Caco-2 (cell line): ENCODE measurements at regions of chr10 and their contacts with region 1.

Region 1: GRCh38 chr10:79374312-79375191 is 27.3 kb downstream of the PPIF start:
- DNase-seq: peak; percentile 83 to 91
- H3K4me3 ChIP-seq: no peak overlapping the region
- H3K4me3 Mint-ChIP-seq: no peak overlapping the region
- H3K27ac Mint-ChIP-seq: peak overlapping the region; percentile 23
- H3K4me1 ChIP-seq: no peaks in the 10 kb centered on the region
- H3K4me1 Mint-ChIP-seq: no peaks in the 10 kb centered on the region
- H3K27me3 ChIP-seq: no peaks in the 10 kb centered on the region
- H3K27me3 Mint-ChIP-seq: no peaks in the 10 kb centered on the region
- CTCF ChIP-seq: peak; percentile 91 to 97

Region 2: DNA sequence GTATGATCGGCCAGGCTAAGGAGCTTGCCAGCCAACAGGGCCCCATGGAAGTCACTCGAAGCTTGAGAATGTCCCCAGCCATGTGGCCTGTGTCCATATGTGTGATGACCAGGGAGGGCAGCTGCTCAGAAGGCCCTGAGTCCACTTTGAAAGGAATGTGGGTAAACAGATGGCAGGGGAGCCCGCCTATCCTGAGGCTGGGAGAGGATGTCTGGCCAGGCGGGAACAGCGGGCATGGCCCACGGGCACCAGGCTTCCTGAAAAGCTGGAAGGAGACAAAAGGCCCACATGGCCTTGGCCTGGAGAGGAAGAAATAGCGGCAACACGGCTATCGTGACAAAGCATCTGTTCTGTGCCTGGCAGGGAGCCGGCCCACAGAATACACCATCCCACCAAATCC is 165.2 kb before region 1 on chr10:
- CTCF ChIA-PET with region 1: no interaction called
- POLR2A ChIA-PET with region 1: no interaction called
- intact Hi-C with region 1: no loop called
- DNase-seq: no peak
- H3K4me3 ChIP-seq: no peak overlapping the region
- H3K4me3 Mint-ChIP-seq: no peak overlapping the region
- H3K27ac Mint-ChIP-seq: no peak overlapping the region
- H3K4me1 ChIP-seq: no peaks in the 10 kb centered on the region
- H3K4me1 Mint-ChIP-seq: no peaks in the 10 kb centered on the region
- H3K27me3 ChIP-seq: no peaks in the 10 kb centered on the region
- H3K27me3 Mint-ChIP-seq: no peaks in the 10 kb centered on the region
- CTCF ChIP-seq: no peak

Region 3: GRCh38 chr10:79347226-79347893 is 27.2 kb before region 1 on chr10 and contains the start of gene PPIF:
- CTCF ChIA-PET with region 1: interaction called, 3 read pairs
- POLR2A ChIA-PET with region 1: no interaction called
- intact Hi-C with region 1: loop called (anchors 1 kb)
- DNase-seq: peak; percentile 92 to 97
- H3K4me3 ChIP-seq: peak within 1 kb of the TSS; percentile 90
- H3K4me3 Mint-ChIP-seq: peak within 1 kb of the TSS; percentile 81
- H3K27ac Mint-ChIP-seq: peak within 1 kb of the TSS; percentile 71
- H3K4me1 ChIP-seq: no peaks in the 10 kb centered on the region; the same call in 1 of the 2 replicates
- H3K4me1 Mint-ChIP-seq: no peaks in the 10 kb centered on the region
- H3K27me3 ChIP-seq: no peaks in the 10 kb centered on the region
- H3K27me3 Mint-ChIP-seq: no peaks in the 10 kb centered on the region
- CTCF ChIP-seq: peak; percentile 89 to 92
- total RNA-seq, gene PPIF: 116 and 133 TPM in 2 replicates

Region 4: DNA sequence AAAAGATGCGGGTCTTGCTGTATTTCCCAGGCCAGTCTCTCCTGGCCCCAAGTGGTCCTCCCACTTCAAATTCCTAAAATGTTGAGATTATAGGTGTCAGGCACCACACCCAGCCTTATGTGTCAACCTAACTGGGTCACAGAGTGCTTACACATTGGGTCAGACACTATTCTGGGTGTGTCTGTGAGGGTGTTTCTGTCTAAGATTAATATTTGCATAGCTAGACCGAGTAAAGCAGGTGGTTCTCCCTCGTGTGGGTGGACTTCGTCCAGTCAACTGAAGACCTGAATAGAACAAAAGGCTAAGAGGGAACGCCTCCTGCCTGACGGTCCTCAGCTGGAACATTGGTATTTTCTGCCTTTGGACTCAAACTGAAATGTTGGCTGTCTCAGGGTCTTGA is 15.8 kb before region 1 on chr10:
- CTCF ChIA-PET with region 1: interaction called, 10 read pairs
- POLR2A ChIA-PET with region 1: no interaction called
- intact Hi-C with region 1: loop called (anchors 2 kb)
- DNase-seq: peak; percentile 87 to 91
- H3K4me3 ChIP-seq: no peak overlapping the region
- H3K4me3 Mint-ChIP-seq: no peak overlapping the region
- H3K27ac Mint-ChIP-seq: peak overlapping the region; percentile 61
- H3K4me1 ChIP-seq: peaks cover 22% of the 10 kb centered on the region
- H3K4me1 Mint-ChIP-seq: peaks cover 8% of the 10 kb centered on the region
- H3K27me3 ChIP-seq: no peaks in the 10 kb centered on the region
- H3K27me3 Mint-ChIP-seq: no peaks in the 10 kb centered on the region
- CTCF ChIP-seq: no peak

Region 5: DNA sequence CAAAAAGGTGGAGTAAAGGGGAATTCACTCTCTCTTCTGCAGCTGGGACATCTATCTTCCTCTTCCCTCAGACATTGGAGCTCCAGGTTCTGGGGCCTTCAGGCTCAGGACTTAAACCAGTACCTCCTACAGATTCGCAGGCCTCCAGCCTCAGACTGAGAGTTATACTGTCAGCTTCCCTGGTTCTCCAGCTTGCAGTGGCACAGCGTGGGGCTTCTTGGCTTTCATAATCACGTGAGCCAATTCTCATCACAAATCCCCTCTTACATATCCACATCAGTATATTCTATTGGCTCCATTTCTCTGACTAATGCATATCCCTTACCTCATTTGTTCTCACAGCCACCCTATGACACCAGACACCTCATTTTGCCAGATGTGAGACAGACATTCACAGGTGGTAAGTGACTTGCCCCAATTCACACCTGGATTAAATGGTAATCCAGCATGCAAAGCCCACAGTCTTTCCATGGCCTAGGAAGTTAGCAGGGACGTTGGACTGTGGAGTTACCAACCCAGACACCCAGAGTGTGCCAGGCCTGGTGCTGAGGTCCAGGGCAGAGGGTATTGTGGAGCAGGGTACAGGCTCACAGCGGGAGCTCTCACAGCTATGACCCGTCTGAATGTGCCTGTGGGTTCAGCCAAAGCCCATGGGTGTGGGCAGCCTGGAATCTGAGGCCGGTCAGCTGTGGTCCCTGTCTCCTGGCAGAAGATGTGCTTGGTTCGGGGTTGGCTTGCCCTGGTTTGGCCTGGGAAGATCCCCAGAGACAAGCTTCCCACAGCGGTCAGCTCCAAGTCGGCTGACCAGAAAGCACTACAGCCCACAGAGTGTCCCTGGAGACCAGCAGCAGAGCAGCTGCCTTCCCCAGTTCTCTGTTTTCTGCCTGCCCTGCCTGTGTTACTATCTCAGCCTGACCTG is 89.3 kb after region 1 on chr10:
- CTCF ChIA-PET with region 1: interaction called, 10 read pairs
- POLR2A ChIA-PET with region 1: no interaction called
- intact Hi-C with region 1: loop called (anchors 1 kb)
- DNase-seq: no peak
- H3K4me3 ChIP-seq: no peak overlapping the region
- H3K4me3 Mint-ChIP-seq: no peak overlapping the region
- H3K27ac Mint-ChIP-seq: no peak overlapping the region
- H3K4me1 ChIP-seq: no peaks in the 10 kb centered on the region
- H3K4me1 Mint-ChIP-seq: no peaks in the 10 kb centered on the region
- H3K27me3 ChIP-seq: no peaks in the 10 kb centered on the region
- H3K27me3 Mint-ChIP-seq: no peaks in the 10 kb centered on the region
- CTCF ChIP-seq: no peak

Region 6: DNA sequence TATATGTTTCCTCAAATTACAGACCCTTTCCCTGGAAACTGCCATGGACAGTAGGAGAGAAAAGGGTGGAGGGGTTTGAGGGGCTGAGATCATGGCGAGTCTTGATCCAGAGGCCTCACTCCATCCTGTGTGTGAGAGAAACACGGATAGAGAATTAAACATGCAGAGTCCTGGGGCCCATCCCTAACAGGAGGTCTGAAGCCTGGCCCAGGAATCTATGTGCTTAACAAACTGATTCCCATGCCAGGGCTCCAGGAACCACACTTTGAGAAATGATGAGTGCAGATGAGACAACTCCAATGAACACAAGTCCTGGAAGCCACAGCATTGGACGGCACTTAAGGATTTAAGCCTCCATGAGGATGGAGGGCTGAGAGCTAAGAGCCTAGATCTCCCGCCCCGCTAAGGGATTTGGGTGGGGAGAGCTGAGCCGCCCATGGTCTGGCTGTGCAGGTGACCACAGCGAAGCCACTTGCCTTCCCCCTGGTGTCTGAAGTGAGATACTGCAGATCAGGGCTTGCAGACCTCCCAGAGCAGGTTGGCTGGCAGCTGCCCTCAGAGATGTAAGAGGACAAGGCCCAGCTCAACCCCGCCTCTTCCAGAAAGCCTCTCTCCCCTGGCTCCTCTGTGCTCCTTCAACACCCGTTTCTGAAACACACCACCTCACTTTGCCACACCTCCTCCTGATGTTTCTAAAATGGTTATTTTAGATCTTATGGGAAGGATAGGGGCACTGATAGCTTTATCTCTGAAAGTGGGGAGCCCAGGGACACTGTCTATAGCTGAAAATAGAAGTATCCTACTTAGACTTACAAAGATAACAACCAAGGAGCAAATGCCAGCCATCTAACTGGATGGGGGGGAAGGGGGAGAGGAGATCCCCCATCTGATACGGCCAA is 113.0 kb after region 1 on chr10:
- CTCF ChIA-PET with region 1: interaction called, 41 read pairs
- POLR2A ChIA-PET with region 1: no interaction called
- intact Hi-C with region 1: loop called (anchors 1 kb)
- DNase-seq: peak; percentile 77
- H3K4me3 ChIP-seq: no peak overlapping the region
- H3K4me3 Mint-ChIP-seq: no peak overlapping the region
- H3K27ac Mint-ChIP-seq: no peak overlapping the region
- H3K4me1 ChIP-seq: no peaks in the 10 kb centered on the region
- H3K4me1 Mint-ChIP-seq: peaks cover 6% of the 10 kb centered on the region
- H3K27me3 ChIP-seq: no peaks in the 10 kb centered on the region; the same call in 1 of the 2 replicates
- H3K27me3 Mint-ChIP-seq: no peaks in the 10 kb centered on the region
- CTCF ChIP-seq: peak; percentile 68 to 85

Region 7: DNA sequence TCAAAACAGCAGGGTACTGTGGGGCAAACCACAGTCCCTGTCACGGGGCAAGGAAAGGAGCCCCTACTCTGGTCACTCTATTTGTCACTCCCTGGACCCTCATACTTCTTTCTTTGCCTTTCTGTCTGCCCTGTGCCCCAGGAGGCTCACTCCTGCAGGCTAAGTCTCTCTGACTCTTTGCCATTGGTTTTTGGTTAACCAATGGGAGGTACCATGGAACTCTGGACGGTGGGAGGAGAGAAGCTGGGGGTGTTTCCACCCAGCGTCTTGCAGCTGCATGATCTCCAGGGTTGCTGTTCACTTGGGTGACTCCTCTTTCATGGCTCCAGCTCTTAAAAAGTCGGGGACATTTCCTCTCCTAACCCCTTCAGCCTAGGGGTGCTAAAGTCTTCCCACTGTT is 122.3 kb after region 1 on chr10:
- CTCF ChIA-PET with region 1: interaction called, 21 read pairs
- POLR2A ChIA-PET with region 1: no interaction called
- intact Hi-C with region 1: loop called (anchors 1 kb)
- DNase-seq: no peak
- H3K4me3 ChIP-seq: no peak overlapping the region
- H3K4me3 Mint-ChIP-seq: no peak overlapping the region
- H3K27ac Mint-ChIP-seq: no peak overlapping the region
- H3K4me1 ChIP-seq: no peaks in the 10 kb centered on the region
- H3K4me1 Mint-ChIP-seq: peaks cover 6% of the 10 kb centered on the region
- H3K27me3 ChIP-seq: no peaks in the 10 kb centered on the region
- H3K27me3 Mint-ChIP-seq: peaks cover 13% of the 10 kb centered on the region
- CTCF ChIP-seq: no peak

Region 8: DNA sequence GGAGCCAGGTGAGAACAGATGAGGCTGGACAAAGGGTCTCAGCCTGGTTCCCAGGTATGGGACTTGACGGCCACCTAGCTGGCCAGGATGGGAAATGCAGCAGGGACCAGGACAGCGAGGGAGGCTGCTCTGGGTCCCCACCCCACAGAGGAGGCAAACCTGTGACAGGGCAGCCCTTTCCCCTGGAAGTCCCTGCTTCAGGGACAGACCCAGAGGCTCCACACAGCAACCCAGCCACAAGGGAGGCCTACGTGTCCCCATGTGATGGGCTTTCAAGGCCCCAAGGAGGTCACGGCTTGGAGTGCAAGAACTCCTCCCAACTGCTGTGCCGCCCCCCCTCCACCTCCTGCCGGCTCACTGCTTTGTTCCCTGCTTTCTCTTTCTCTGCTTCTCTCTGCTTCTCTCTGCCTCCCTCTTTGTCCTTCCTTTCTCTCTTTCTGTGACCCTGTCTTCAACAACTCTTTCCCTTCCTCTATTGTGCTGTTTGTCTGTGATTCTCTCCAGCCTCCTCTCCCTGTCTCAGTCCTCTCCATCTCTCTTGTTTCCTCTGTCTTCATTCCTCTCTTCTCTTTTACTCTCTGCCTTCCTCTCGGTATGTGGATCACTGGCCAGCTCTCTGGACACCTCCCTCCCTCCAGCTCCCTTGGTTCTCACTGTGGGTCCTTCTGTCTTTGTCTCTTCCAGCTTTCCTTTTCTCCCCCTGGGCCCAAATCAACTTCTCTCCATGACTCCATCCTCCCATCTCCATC is 128.2 kb after region 1 on chr10:
- CTCF ChIA-PET with region 1: interaction called, 21 read pairs
- POLR2A ChIA-PET with region 1: no interaction called
- intact Hi-C with region 1: loop called (anchors 1 kb)
- DNase-seq: peak; percentile 72
- H3K4me3 ChIP-seq: no peak overlapping the region
- H3K4me3 Mint-ChIP-seq: no peak overlapping the region
- H3K27ac Mint-ChIP-seq: no peak overlapping the region
- H3K4me1 ChIP-seq: no peaks in the 10 kb centered on the region
- H3K4me1 Mint-ChIP-seq: peaks cover 7% of the 10 kb centered on the region
- H3K27me3 ChIP-seq: peaks cover 3% of the 10 kb centered on the region; the same call in 1 of the 2 replicates
- H3K27me3 Mint-ChIP-seq: peaks cover 33% of the 10 kb centered on the region
- CTCF ChIP-seq: peak; percentile 62 to 70